Sigmoid colon (tissue), 7 donors: ENCODE measurements at regions of chr16 and their contacts with region 1.

Region 1: GRCh38 chr16:83826146-83826913 is 18.6 kb downstream of the HSBP1 start:
- DNase-seq: peak; percentile 95
- H3K4me3 ChIP-seq: no peak overlapping the region
- H3K27ac ChIP-seq: no peak overlapping the region
- H3K4me1 ChIP-seq: peaks cover 2 to 6% (median 4%) of the 10 kb centered on the region in 4 donors
- H3K27me3 ChIP-seq: no peaks in the 10 kb centered on the region
- CTCF ChIP-seq: peak; percentile 67 to 95 (median 90)
- EP300 ChIP-seq: no peak
- POLR2A ChIP-seq: no peak

Region 2: GRCh38 chr16:83666449-83666848 is 159.9 kb before region 1 on chr16:
- intact Hi-C with region 1: no loop called
- DNase-seq: no peak
- H3K4me3 ChIP-seq: no peak overlapping the region
- H3K27ac ChIP-seq: no peak overlapping the region
- H3K4me1 ChIP-seq: no peaks in the 10 kb centered on the region
- H3K27me3 ChIP-seq: no peaks in the 10 kb centered on the region
- CTCF ChIP-seq: no peak
- EP300 ChIP-seq: no peak
- POLR2A ChIP-seq: no peak

Region 3: DNA sequence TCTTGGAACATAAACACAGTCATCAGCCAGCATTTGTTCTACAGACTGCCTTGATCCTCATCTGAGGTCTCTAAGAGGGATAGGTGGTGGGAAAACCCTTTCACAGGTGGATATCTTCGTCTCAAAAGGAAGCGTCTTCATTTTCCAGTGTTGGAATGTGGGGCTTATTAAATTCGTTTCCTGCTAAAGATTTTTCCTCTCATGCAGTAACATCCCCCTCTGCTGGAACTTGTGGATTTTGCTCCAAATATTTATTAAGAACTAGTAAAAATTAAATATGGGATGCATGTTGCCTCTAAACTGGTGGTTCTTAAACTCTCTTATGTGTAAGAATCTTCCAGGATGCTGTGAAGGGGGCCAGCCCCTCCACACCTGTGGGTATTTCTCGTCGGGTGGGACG is 52.5 kb after region 1 on chr16:
- intact Hi-C with region 1: loop called (anchors 2 kb)
- DNase-seq: no peak
- H3K4me3 ChIP-seq: no peak overlapping the region
- H3K27ac ChIP-seq: no peak overlapping the region
- H3K4me1 ChIP-seq: no peaks in the 10 kb centered on the region
- H3K27me3 ChIP-seq: no peaks in the 10 kb centered on the region
- CTCF ChIP-seq: peak in 3 of 4 experiments; percentile 19 to 31 (median 31)
- EP300 ChIP-seq: no peak
- POLR2A ChIP-seq: no peak

Region 4: GRCh38 chr16:83898463-83899271 is 72.3 kb after region 1 on chr16 and contains the start of gene MLYCD:
- intact Hi-C with region 1: loop called (anchors 1 kb)
- DNase-seq: peak; percentile 95
- H3K4me3 ChIP-seq: peak within 1 kb of the TSS; percentile 83 to 94 (median 88)
- H3K27ac ChIP-seq: peak within 1 kb of the TSS; percentile 90 to 98 (median 96)
- H3K4me1 ChIP-seq: peaks cover 0 to 48% (median 38%) of the 10 kb centered on the region in 4 donors
- H3K27me3 ChIP-seq: no peaks in the 10 kb centered on the region
- CTCF ChIP-seq: no peak
- EP300 ChIP-seq: no peak
- POLR2A ChIP-seq: no peak
- total RNA-seq, gene MLYCD: 9.3 to 16.3 (median 10.8) TPM

Region 5: GRCh38 chr16:84062734-84063640 is 236.7 kb after region 1 on chr16:
- intact Hi-C with region 1: loop called (anchors 5 kb)
- DNase-seq: peak; percentile 84
- H3K4me3 ChIP-seq: no peak overlapping the region
- H3K27ac ChIP-seq: no peak overlapping the region
- H3K4me1 ChIP-seq: no peaks in the 10 kb centered on the region
- H3K27me3 ChIP-seq: no peaks in the 10 kb centered on the region
- CTCF ChIP-seq: peak in 3 of 4 experiments; percentile 59 to 81 (median 81)
- EP300 ChIP-seq: no peak
- POLR2A ChIP-seq: no peak